ENCODE measurements at regions of chr11 and their contacts with region 1.

Region 1: GRCh38 chr11:77820563-77821348 is at the starts of genes AAMDC and RSF1:
- DNase-seq: peak; percentile 95
- ATAC-seq: peak; percentile 91
- H3K4me3 ChIP-seq: peak within 1 kb of the TSS; percentile 79 to 94 (median 94)
- H3K27ac ChIP-seq: peak within 1 kb of the TSS; percentile 85
- H3K4me1 ChIP-seq: peaks cover 55% of the 10 kb centered on the region
- H3K27me3 ChIP-seq: no peaks in the 10 kb centered on the region; a peak in 1 of 5 replicates
- CTCF ChIP-seq: peak; percentile 81
- EP300 ChIP-seq: 0 out of 4 replicates have a peak, but pooled peaks of 1 of the 2 experiments have one; percentile 3
- POLR2A ChIP-seq: peak; percentile 80 to 93
- RAD21 ChIP-seq: peak; percentile 58; the same call in 1 of the 2 replicates
- total RNA-seq, gene AAMDC: 35.6 and 49.5 TPM in 2 replicates
- total RNA-seq, gene RSF1: 33.1 and 47.7 TPM in 2 replicates

Region 2: GRCh38 chr11:77619576-77620198 is 201.1 kb before region 1 on chr11:
- CTCF ChIA-PET with region 1: no interaction called
- POLR2A ChIA-PET with region 1: no interaction called
- in situ Hi-C with region 1: no loop called
- intact Hi-C with region 1: no loop called
- DNase-seq: peak; percentile 50
- ATAC-seq: no peak
- H3K4me3 ChIP-seq: no peak overlapping the region
- H3K27ac ChIP-seq: no peak overlapping the region
- H3K4me1 ChIP-seq: no peaks in the 10 kb centered on the region
- H3K27me3 ChIP-seq: no peaks in the 10 kb centered on the region
- CTCF ChIP-seq: peak; percentile 73
- EP300 ChIP-seq: no peak
- POLR2A ChIP-seq: no peak
- RAD21 ChIP-seq: peak; percentile 61; the same call in 1 of the 2 replicates

Region 3: GRCh38 chr11:77776455-77776854 is 44.3 kb before region 1 on chr11:
- CTCF ChIA-PET with region 1: no interaction called
- POLR2A ChIA-PET with region 1: no interaction called
- in situ Hi-C with region 1: no loop called
- intact Hi-C with region 1: loop called (anchors 2 kb)
- DNase-seq: peak; percentile 29
- ATAC-seq: no peak
- H3K4me3 ChIP-seq: no peak overlapping the region
- H3K27ac ChIP-seq: no peak overlapping the region
- H3K4me1 ChIP-seq: peaks cover 17% of the 10 kb centered on the region
- H3K27me3 ChIP-seq: no peaks in the 10 kb centered on the region
- CTCF ChIP-seq: peak; percentile 52; the same call in 1 of the 2 replicates
- EP300 ChIP-seq: no peak
- POLR2A ChIP-seq: no peak
- RAD21 ChIP-seq: peak; percentile 39; the same call in 1 of the 2 replicates

Region 4: GRCh38 chr11:78000193-78000592 is 179.4 kb after region 1 on chr11:
- CTCF ChIA-PET with region 1: no interaction called
- POLR2A ChIA-PET with region 1: interaction called, 9 read pairs
- in situ Hi-C with region 1: loop called (anchors 10 kb)
- intact Hi-C with region 1: loop called (anchors 2 kb)
- DNase-seq: peak; percentile 70
- ATAC-seq: peak; percentile 92
- H3K4me3 ChIP-seq: no peak overlapping the region
- H3K27ac ChIP-seq: no peak overlapping the region
- H3K4me1 ChIP-seq: peaks cover 28% of the 10 kb centered on the region
- H3K27me3 ChIP-seq: no peaks in the 10 kb centered on the region
- CTCF ChIP-seq: peak; percentile 80
- EP300 ChIP-seq: no peak
- POLR2A ChIP-seq: no peak
- RAD21 ChIP-seq: peak; percentile 65; the same call in 1 of the 2 replicates